ENCODE measurements at regions of chr20 and their contacts with region 1.

Region 1: DNA sequence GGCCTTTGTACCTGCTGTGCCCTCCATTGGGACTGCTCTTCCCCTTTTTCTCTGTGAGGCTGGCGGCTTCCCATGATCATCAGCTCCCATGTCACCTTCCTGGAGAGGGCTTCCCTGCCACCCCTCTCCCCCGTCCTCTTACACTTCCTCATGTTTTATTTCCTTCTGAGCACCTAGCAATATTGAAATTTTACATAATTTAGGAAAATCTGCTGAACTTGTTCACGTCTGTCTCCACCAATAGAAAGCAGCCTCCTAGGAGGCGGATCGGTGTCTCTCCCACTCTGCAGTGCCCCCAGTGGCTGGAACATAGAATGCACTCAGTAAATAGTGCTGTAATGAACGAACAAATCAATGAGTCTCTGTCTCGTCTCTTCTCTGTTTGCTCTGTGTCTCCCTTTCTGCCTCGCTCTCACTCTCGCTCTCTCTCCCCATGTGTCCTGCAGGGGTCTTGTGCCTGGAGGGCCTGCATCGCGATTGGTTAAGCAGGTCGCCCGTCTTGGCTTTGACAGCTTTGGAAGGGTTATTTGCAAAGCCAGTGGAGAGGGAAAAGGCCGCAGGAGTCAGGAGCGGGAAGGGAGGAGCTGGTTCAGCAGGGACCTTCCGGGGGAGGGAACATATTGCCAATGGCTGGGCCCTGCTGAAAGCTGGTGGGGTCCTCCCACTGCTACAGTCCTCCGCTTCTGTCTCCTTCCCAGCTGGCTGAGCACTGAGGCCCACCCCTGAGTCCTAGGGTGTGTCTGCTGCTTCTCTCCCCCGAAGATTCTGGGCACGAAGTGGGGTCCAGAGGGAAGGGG is 12.1 kb upstream of the OCSTAMP start:
- DNase-seq: no peak

Region 2: DNA sequence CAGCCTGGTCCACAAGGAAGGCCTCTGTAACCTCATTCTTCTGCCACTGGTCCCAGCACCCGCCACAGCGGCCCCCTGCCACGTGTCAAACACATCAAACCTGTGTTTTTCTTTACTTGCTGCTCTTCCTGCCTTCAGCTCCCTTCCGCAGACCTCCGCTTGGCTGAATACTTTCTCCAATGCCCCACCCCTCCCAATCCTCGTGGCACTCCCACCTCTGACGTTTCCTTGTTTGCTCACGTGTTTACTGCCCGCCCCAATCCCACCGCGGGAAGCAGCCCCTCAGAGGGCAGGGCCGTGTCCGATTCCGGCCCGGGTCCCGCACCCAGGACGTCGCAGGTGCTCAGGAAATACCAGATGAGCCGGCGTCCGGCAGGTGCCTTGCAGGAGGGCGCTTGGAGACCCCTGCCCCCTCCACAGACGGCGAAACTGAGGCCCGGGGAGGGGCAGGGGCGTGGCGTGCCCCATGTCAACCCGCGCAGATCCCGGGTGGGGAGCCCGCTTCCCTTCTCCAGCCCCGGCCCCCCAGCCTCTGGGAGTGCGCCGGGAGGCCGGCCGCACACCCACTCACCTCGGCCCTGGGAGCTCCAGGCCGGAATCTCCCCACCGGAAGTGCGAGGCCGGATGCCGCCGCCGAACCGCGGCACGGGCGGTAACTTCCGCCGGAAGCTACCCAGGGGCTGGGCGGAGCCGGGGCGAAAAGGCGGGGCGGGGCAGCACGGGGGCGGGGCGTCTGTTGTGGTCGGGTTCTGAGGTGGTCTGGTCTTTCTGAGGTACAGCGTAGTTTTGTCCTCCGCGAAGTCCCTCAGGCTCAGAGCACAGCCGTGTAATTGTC is 198.6 kb before region 1 on chr20:
- intact Hi-C with region 1: no loop called
- DNase-seq: peak; percentile 93

Region 3: GRCh38 chr20:46689082-46689754 is 126.6 kb after region 1 on chr20 and contains the start of gene TP53RK:
- intact Hi-C with region 1: loop called (anchors 5 kb)
- DNase-seq: peak; percentile 98
- total RNA-seq, gene TP53RK: 6.4 TPM

Region 4: DNA sequence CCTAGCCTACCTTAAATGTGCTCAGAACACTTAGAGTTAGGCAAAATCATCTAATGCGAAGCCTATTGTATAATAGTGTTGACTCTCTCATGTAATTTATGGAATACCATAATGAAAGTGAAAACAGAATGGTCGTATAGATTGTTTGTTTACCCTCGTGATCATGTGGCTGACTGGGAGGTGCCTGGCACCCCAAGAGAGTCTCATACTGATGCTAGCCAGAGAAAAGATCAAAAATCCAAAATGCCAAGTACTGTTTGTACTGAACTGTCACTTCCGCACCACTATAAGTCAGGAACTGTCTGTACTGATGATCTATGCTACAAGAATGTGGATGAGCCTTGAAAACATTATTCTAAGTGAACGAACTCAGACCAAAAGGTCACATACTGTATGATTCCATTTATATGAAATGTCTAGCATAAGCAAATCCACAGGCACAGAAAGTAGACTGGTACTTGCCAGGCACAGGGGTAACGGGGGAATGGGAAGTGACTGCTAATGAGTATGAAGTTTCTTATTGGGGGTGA is 771.5 kb after region 1 on chr20:
- intact Hi-C with region 1: no loop called
- DNase-seq: no peak